AG04450 (cell line): ENCODE measurements at regions of chr4 and their contacts with region 1.

Region 1: GRCh38 chr4:184649026-184649970 is at the starts of genes CASP3 and PRIMPOL:
- DNase-seq: peak; percentile 78
- H3K4me3 ChIP-seq: peak within 1 kb of the TSS; percentile 81
- H3K27ac ChIP-seq: peak within 1 kb of the TSS; percentile 77
- H3K27me3 ChIP-seq: no peaks in the 10 kb centered on the region
- CTCF ChIP-seq: peak; percentile 38
- polyA plus RNA-seq, gene CASP3: 38.9 and 51.8 TPM in 2 replicates
- polyA plus RNA-seq, gene PRIMPOL: 6.6 and 12.2 TPM in 2 replicates

Region 2: DNA sequence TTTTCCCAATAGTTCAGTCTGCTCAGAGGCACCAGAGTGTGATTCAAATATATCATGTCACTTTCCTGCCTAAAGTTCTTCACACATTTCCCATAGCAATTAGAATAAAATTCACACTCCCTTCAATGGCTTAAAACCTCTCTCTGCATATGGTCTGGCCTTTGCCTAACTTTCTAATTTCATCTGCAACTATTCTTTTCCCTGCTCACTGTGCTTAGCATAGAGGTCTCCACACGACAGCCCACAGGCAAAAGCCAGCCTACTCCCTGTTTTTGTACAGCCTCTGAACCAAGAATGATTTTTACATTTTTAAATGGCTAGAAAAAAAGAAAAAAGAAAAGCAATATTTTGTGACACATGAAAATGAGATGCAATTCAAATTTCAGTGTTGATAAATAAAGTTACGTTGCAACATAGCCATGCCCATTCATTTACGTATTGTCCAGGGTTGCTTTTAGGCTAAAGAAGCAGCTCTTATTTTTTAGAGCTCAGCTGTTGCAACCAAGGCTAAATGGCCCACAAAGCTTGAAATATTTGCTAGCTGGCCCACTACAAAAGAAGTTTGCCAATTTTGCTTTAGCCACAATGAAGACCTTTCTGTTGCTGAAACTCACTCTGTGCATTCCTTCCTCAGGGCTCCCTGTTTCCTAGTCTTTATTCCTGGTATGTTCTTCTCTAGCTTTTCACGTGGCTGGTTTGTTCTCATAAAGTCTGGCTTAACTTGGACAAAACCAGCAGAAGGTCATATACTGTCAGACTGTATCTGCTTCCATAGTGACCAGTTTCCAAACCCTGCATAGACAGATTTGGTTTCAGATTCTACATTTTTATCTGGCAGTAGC is 148.3 kb before region 1 on chr4:
- CTCF ChIA-PET with region 1: no interaction called
- POLR2A ChIA-PET with region 1: no interaction called
- DNase-seq: no peak
- H3K4me3 ChIP-seq: no peak overlapping the region
- H3K27ac ChIP-seq: no peak overlapping the region
- H3K27me3 ChIP-seq: no peaks in the 10 kb centered on the region
- CTCF ChIP-seq: no peak

Region 3: DNA sequence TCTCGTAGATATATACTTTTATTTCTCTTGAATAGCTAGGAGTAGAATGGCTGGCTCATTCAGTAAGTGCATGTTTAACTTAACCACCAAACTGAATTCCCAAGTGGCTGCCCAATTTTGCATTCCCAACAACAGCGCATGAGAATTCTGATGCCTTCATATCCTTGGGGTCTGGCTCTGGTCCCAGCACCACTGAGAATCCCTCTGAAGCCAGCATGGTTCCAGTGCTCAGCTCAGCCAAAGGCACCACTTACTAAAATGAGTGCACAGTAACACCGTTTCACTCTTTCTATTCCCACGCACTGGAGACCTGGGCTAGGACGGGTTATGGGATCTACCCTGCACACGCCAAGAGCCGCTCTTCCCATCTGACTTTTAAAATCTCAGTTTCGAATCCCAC is 60.4 kb before region 1 on chr4:
- CTCF ChIA-PET with region 1: no interaction called
- POLR2A ChIA-PET with region 1: no interaction called
- DNase-seq: no peak
- H3K4me3 ChIP-seq: no peak overlapping the region
- H3K27ac ChIP-seq: no peak overlapping the region
- H3K27me3 ChIP-seq: peaks cover 4% of the 10 kb centered on the region
- CTCF ChIP-seq: no peak

Region 4: DNA sequence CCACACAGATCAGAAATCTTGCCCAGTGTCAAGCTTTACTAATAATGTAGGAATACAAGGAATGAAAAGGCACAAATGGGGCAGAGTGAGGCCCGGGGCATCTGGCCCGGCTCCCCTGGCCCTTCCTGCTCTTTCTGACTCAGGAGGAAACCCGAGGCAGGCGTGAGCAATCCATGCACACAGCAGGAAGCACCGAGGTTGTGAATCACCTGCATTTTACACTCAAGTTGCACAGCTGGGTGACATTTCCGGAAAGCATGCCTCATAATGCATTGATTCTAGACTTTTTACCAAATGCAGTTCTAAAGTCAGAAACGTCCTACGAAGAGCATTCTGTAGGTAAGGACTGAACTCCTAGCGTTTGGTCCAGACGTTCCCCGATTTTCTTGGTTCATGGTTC is 39.1 kb after region 1 on chr4:
- CTCF ChIA-PET with region 1: interaction called, 4 read pairs
- POLR2A ChIA-PET with region 1: interaction called, 10 read pairs
- DNase-seq: peak; percentile 72
- H3K4me3 ChIP-seq: no peak overlapping the region
- H3K27ac ChIP-seq: peak overlapping the region; percentile 42
- H3K27me3 ChIP-seq: no peaks in the 10 kb centered on the region
- CTCF ChIP-seq: no peak

Region 5: DNA sequence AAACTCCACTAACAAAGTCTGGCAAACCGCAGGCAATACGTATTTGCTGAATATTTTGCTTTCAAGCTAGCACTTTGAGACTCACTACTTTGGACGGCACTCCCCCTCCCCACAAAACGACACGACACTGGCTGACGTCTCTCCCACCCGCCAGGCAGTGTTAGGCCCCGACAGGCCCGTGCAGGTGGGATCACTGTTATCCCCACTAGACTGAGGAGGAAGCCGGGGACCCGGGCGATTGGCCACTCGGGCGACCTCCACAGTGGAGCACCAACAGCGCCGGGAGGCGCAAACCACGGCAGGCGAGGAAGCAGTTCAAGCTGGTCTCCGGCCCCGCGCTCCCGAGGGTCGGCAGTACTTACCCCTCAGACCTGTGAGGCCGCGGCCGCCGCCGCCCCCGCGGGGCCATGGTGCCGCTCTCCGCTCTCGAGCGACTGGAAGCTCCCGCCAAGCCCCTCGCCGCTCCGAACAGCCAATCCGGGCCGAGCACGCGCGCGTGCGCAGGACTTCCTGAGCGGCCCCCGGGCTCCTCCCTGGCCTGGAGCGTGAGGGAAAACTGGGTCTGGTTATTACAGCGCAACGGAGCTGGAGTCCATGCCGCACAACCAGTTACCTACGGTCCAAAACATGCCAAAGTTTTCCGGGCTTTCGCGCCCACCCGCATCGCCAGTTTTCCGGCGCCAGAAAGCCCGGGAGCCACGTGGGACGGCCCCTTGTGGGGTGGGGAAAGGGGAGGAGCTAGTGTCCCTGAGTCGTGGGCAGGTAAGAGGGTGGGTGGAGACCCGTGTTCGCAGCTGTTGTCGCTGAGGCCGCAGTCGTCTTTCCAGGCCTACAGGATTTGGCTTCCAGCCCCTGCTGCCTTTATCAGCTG is 84.6 kb after region 1 on chr4 and contains the start of gene CENPU:
- CTCF ChIA-PET with region 1: interaction called, 3 read pairs
- POLR2A ChIA-PET with region 1: interaction called, 30 read pairs
- DNase-seq: peak; percentile 96
- H3K4me3 ChIP-seq: peak within 1 kb of the TSS; percentile 89
- H3K27ac ChIP-seq: peak within 1 kb of the TSS; percentile 52
- H3K27me3 ChIP-seq: no peaks in the 10 kb centered on the region
- CTCF ChIP-seq: no peak
- polyA plus RNA-seq, gene CENPU: 6.3 and 8.0 TPM in 2 replicates